ENCODE measurements at regions of chr6 and their contacts with region 1.

Region 1: DNA sequence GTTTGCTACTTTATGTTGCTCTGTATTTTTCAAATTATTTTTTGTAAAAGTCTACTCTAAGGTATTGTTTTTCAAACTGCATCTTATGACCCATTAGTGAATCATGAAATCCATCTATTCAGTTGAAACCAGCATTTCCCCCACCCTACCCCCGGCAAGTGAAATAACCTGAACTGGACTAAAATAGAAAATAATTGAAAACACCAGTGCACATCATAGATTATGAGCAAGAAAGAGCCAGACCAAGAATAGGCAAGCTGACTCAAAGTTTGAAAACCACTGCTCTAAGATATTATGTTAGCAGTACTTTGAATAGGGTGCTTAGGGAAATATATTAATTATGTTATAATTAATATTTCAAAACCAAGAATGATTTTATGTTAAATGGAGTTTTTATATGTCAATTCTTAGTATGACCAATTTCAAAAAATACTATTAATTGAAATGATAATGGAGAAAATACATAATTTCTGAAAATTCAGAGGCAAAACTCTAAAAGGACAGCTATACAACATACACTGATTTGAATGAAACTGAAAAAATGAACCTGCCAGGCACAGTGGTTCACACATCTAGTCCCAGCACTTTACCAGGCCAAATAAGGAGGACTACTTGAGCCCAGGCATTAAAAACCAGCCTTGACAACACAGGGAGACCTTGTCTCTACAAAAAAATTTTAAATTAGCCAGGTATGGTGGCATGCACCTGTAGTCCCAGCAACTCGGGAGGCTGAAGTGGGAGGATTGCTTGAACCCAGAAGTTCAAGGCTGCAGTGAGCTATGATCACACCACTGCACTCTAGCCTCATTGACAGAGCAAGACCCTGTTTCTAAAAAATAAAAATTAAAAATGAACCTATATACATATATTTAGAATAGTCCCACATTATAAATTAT is 112.0 kb downstream of the CDK19 start:
- DNase-seq: no peak
- H3K4me3 Mint-ChIP-seq: no peak overlapping the region
- H3K27ac Mint-ChIP-seq: peak overlapping the region; percentile 3
- H3K4me1 Mint-ChIP-seq: peaks cover 24% of the 10 kb centered on the region
- H3K27me3 Mint-ChIP-seq: no peaks in the 10 kb centered on the region
- CTCF ChIP-seq: no peak

Region 2: GRCh38 chr6:110831405-110831804 is 128.1 kb after region 1 on chr6:
- CTCF ChIA-PET with region 1: no interaction called
- POLR2A ChIA-PET with region 1: no interaction called
- intact Hi-C with region 1: no loop called
- DNase-seq: no peak
- H3K4me3 Mint-ChIP-seq: no peak overlapping the region
- H3K27ac Mint-ChIP-seq: no peak overlapping the region
- H3K4me1 Mint-ChIP-seq: no peaks in the 10 kb centered on the region
- H3K27me3 Mint-ChIP-seq: no peaks in the 10 kb centered on the region
- CTCF ChIP-seq: no peak

Region 3: GRCh38 chr6:110859335-110859792 is 156.1 kb after region 1 on chr6:
- CTCF ChIA-PET with region 1: no interaction called
- POLR2A ChIA-PET with region 1: no interaction called
- intact Hi-C with region 1: no loop called
- DNase-seq: no peak
- H3K4me3 Mint-ChIP-seq: no peak overlapping the region
- H3K27ac Mint-ChIP-seq: no peak overlapping the region
- H3K4me1 Mint-ChIP-seq: no peaks in the 10 kb centered on the region
- H3K27me3 Mint-ChIP-seq: no peaks in the 10 kb centered on the region
- CTCF ChIP-seq: no peak

Region 4: DNA sequence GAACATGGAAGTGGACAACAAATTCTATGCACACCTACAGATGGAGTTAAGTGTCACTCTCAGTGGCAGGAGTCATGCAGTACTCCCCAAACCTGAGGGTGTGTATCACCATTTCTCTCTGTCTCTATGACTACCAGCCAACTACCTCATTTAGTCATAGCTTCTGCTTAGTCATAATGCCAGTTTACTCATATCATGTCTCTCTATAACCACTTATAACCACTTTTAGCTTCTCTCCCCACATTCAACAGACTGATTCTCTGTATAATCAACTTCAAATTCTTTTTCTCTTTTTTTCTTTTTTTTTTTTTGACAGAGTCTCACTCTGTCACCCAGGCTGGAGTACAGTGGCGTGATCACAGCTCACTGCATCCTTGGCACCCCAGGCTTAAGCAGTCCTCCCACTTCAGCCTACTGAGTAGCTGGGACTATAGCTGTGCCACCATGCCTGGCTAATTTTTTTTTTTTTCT is 241.5 kb after region 1 on chr6:
- CTCF ChIA-PET with region 1: interaction called, 4 read pairs
- POLR2A ChIA-PET with region 1: no interaction called
- intact Hi-C with region 1: loop called (anchors 5 kb)
- DNase-seq: peak; percentile 87
- H3K4me3 Mint-ChIP-seq: no peak overlapping the region
- H3K27ac Mint-ChIP-seq: peak overlapping the region; percentile 89
- H3K4me1 Mint-ChIP-seq: peaks cover 6% of the 10 kb centered on the region
- H3K27me3 Mint-ChIP-seq: no peaks in the 10 kb centered on the region
- CTCF ChIP-seq: no peak